ENCODE measurements at regions of chr9 and their contacts with region 1.

Region 1: GRCh38 chr9:77456829-77457437 is 191.2 kb downstream of the GNA14 start:
- DNase-seq: peak; percentile 93
- H3K4me3 Mint-ChIP-seq: no peak overlapping the region
- H3K27ac Mint-ChIP-seq: no peak overlapping the region
- H3K4me1 Mint-ChIP-seq: peaks cover 10% of the 10 kb centered on the region
- H3K27me3 Mint-ChIP-seq: peaks cover 12% of the 10 kb centered on the region
- CTCF ChIP-seq: peak; percentile 77

Region 2: GRCh38 chr9:76744336-76744735 is 712.6 kb before region 1 on chr9:
- CTCF ChIA-PET with region 1: no interaction called
- POLR2A ChIA-PET with region 1: no interaction called
- intact Hi-C with region 1: no loop called
- DNase-seq: no peak
- H3K4me3 Mint-ChIP-seq: no peak overlapping the region
- H3K27ac Mint-ChIP-seq: no peak overlapping the region
- H3K4me1 Mint-ChIP-seq: no peaks in the 10 kb centered on the region
- H3K27me3 Mint-ChIP-seq: peaks cover 16% of the 10 kb centered on the region
- CTCF ChIP-seq: no peak

Region 3: DNA sequence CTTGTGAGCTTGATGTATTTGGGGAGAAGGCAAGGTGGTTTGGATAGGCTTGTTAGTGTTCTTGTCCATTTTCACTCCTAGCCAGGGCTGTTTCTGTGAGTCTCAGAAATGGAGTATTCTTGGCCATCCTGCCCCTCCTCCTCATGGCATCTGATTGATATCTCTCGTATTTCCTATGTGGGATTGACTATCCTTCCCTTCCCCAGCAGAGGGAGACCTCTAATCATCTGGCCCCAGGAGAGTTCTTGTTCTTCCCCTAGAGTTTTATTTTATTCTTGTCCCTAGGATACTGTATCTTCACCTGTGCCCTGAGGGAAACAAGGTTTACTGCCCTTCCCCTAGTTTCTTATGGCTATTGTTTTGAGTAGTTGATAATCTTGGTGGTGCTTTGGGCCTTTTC is 165.2 kb before region 1 on chr9:
- CTCF ChIA-PET with region 1: interaction called, 22 read pairs
- POLR2A ChIA-PET with region 1: no interaction called
- intact Hi-C with region 1: loop called (anchors 2 kb)
- DNase-seq: peak; percentile 65
- H3K4me3 Mint-ChIP-seq: no peak overlapping the region
- H3K27ac Mint-ChIP-seq: peak overlapping the region; percentile 2
- H3K4me1 Mint-ChIP-seq: peaks cover 19% of the 10 kb centered on the region
- H3K27me3 Mint-ChIP-seq: no peaks in the 10 kb centered on the region
- CTCF ChIP-seq: peak; percentile 53

Region 4: DNA sequence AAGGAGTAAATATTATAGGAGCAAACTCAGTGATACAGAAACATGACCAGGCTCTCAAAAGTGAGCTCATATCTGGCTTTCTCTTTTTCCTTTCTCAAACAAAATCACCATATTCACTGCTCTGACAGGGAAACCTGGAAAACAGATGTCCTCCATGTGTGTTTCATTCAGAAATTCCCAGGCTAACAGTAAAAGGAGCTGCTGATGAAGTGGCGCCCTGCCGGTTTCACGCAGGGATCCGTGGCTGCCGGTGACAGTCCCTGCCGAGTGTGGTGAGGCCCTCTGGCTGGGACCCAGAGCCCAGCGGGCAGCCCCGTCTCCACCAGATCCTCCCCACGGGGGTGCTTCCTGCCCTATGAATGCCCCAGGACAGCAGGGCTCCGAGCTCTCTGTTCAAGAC is 16.9 kb before region 1 on chr9:
- CTCF ChIA-PET with region 1: interaction called, 132 read pairs
- POLR2A ChIA-PET with region 1: no interaction called
- intact Hi-C with region 1: no loop called
- DNase-seq: no peak
- H3K4me3 Mint-ChIP-seq: no peak overlapping the region
- H3K27ac Mint-ChIP-seq: no peak overlapping the region
- H3K4me1 Mint-ChIP-seq: no peaks in the 10 kb centered on the region
- H3K27me3 Mint-ChIP-seq: no peaks in the 10 kb centered on the region
- CTCF ChIP-seq: no peak

Region 5: GRCh38 chr9:77488439-77489126 is 31.6 kb after region 1 on chr9:
- CTCF ChIA-PET with region 1: interaction called, 76 read pairs
- POLR2A ChIA-PET with region 1: interaction called, 4 read pairs
- intact Hi-C with region 1: loop called (anchors 1 kb)
- DNase-seq: peak; percentile 41
- H3K4me3 Mint-ChIP-seq: no peak overlapping the region
- H3K27ac Mint-ChIP-seq: no peak overlapping the region
- H3K4me1 Mint-ChIP-seq: no peaks in the 10 kb centered on the region
- H3K27me3 Mint-ChIP-seq: no peaks in the 10 kb centered on the region
- CTCF ChIP-seq: peak; percentile 41

Region 6: GRCh38 chr9:77648234-77649120 is 191.5 kb after region 1 on chr9 and contains the start of gene GNA14:
- CTCF ChIA-PET with region 1: interaction called, 4 read pairs
- POLR2A ChIA-PET with region 1: no interaction called
- intact Hi-C with region 1: loop called (anchors 1 kb)
- DNase-seq: no peak
- H3K4me3 Mint-ChIP-seq: no peak within 1 kb of the TSS
- H3K27ac Mint-ChIP-seq: no peak within 1 kb of the TSS
- H3K4me1 Mint-ChIP-seq: no peaks in the 10 kb centered on the region
- H3K27me3 Mint-ChIP-seq: no peaks in the 10 kb centered on the region
- CTCF ChIP-seq: no peak
- total RNA-seq, gene GNA14: not detected in 2 replicates

Region 7: GRCh38 chr9:77751341-77752091 is 294.6 kb after region 1 on chr9:
- CTCF ChIA-PET with region 1: interaction called, 109 read pairs
- POLR2A ChIA-PET with region 1: interaction called, 3 read pairs
- intact Hi-C with region 1: loop called (anchors 1 kb)
- DNase-seq: peak; percentile 58
- H3K4me3 Mint-ChIP-seq: no peak overlapping the region
- H3K27ac Mint-ChIP-seq: no peak overlapping the region
- H3K4me1 Mint-ChIP-seq: peaks cover 16% of the 10 kb centered on the region
- H3K27me3 Mint-ChIP-seq: no peaks in the 10 kb centered on the region
- CTCF ChIP-seq: peak; percentile 39

Region 8: GRCh38 chr9:78121488-78121887 is 664.6 kb after region 1 on chr9:
- CTCF ChIA-PET with region 1: interaction called, 9 read pairs
- POLR2A ChIA-PET with region 1: no interaction called
- intact Hi-C with region 1: loop called (anchors 1 kb)
- DNase-seq: peak; percentile 80
- H3K4me3 Mint-ChIP-seq: no peak overlapping the region
- H3K27ac Mint-ChIP-seq: no peak overlapping the region
- H3K4me1 Mint-ChIP-seq: peaks cover 30% of the 10 kb centered on the region
- H3K27me3 Mint-ChIP-seq: no peaks in the 10 kb centered on the region
- CTCF ChIP-seq: peak; percentile 66

Measured in MCF 10A (cell line).